PC-3 (cell line): ENCODE measurements at regions of chr7 and their contacts with region 1.

Region 1: GRCh38 chr7:16762177-16762576 is 8.6 kb downstream of the TSPAN13 start:
- DNase-seq: no peak
- ATAC-seq: no peak
- H3K4me3 ChIP-seq: no peak overlapping the region
- H3K27ac ChIP-seq: no peak overlapping the region
- H3K4me1 ChIP-seq: no peaks in the 10 kb centered on the region; the same call in 1 of the 2 replicates
- H3K27me3 ChIP-seq: no peaks in the 10 kb centered on the region
- CTCF ChIP-seq: no peak

Region 2: GRCh38 chr7:16712916-16713315 is 49.3 kb before region 1 on chr7:
- CTCF ChIA-PET with region 1: no interaction called
- POLR2A ChIA-PET with region 1: no interaction called
- intact Hi-C with region 1: loop called (anchors 5 kb)
- DNase-seq: peak; percentile 62
- ATAC-seq: peak; percentile 33
- H3K4me3 ChIP-seq: no peak overlapping the region
- H3K27ac ChIP-seq: peak overlapping the region; percentile 45
- H3K4me1 ChIP-seq: peaks cover 28% of the 10 kb centered on the region
- H3K27me3 ChIP-seq: no peaks in the 10 kb centered on the region
- CTCF ChIP-seq: no peak

Region 3: DNA sequence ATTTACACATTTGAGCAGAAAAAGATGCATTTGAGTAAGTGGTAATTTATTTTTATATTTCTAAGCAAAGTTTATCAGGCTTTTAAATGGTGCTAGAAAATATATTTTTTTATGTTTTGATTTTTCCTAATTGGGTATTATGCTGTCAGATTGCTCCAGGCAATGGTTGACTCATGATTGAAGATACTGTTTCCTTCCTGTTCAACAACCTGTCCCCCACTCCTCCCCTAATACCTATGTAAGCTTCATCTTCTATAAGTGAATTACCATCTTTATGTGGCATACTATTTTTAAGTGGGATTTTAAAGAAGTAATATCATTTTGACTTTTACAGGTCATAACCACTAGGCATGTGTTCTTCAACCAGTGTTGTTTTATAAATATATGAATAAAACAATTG is 12.8 kb after region 1 on chr7:
- CTCF ChIA-PET with region 1: no interaction called
- POLR2A ChIA-PET with region 1: interaction called, 14 read pairs
- intact Hi-C with region 1: no loop called
- DNase-seq: peak; percentile 42
- ATAC-seq: peak; percentile 68
- H3K4me3 ChIP-seq: no peak overlapping the region
- H3K27ac ChIP-seq: no peak overlapping the region
- H3K4me1 ChIP-seq: peaks cover 7% of the 10 kb centered on the region
- H3K27me3 ChIP-seq: no peaks in the 10 kb centered on the region
- CTCF ChIP-seq: no peak